Endothelial cell of umbilical vein (primary cell): ENCODE measurements at regions of chr22 and their contacts with region 1.

Region 1: DNA sequence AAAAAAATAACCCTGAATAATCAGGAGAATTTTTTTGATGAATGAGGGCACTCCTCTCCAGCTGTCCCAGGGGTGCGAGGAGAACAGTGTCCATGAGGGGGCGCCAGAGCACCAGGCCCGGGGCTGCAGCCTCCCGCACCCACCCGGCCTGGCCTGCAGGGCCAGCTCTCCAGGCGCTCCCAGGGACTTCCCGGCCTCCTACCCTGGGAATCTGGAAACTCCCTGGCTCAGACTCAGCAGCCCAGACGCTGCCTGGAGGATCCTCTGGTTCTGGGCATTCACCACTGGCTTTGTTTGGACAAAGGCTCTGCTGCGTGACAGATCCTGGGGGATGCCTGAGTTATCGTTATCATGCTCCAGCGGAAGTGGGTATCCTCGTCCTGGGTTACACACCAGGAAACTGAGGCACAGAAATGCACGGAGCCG is 31.0 kb downstream of the MCM5 start:
- DNase-seq: peak; percentile 90
- H3K4me3 ChIP-seq: no peak overlapping the region
- H3K27ac ChIP-seq: peak overlapping the region; percentile 23
- H3K4me1 ChIP-seq: no peaks in the 10 kb centered on the region
- H3K27me3 ChIP-seq: no peaks in the 10 kb centered on the region
- CTCF ChIP-seq: peak; percentile 97 to 98
- POLR2A ChIP-seq: no peak

Region 2: GRCh38 chr22:35350539-35351503 is 80.1 kb before region 1 on chr22:
- CTCF ChIA-PET with region 1: interaction called, 39 read pairs
- POLR2A ChIA-PET with region 1: no interaction called
- dilution Hi-C with region 1: no loop called
- intact Hi-C with region 1: loop called (anchors 1 kb)
- DNase-seq: peak; percentile 89
- H3K4me3 ChIP-seq: peak overlapping the region; percentile 56 to 75 (median 59)
- H3K27ac ChIP-seq: peak overlapping the region; percentile 70
- H3K4me1 ChIP-seq: peaks cover 14% of the 10 kb centered on the region
- H3K27me3 ChIP-seq: no peaks in the 10 kb centered on the region
- CTCF ChIP-seq: peak; percentile 79 to 90
- POLR2A ChIP-seq: peak; percentile 75

Region 3: GRCh38 chr22:35467681-35468434 is 36.9 kb after region 1 on chr22:
- CTCF ChIA-PET with region 1: interaction called, 13 read pairs
- POLR2A ChIA-PET with region 1: no interaction called
- dilution Hi-C with region 1: no loop called
- intact Hi-C with region 1: no loop called
- DNase-seq: peak; percentile 90
- H3K4me3 ChIP-seq: no peak overlapping the region
- H3K27ac ChIP-seq: peak overlapping the region; percentile 60
- H3K4me1 ChIP-seq: peaks cover 27% of the 10 kb centered on the region
- H3K27me3 ChIP-seq: no peaks in the 10 kb centered on the region
- CTCF ChIP-seq: no peak
- POLR2A ChIP-seq: no peak

Region 4: GRCh38 chr22:35552196-35552842 is 121.4 kb after region 1 on chr22:
- CTCF ChIA-PET with region 1: interaction called, 12 read pairs
- POLR2A ChIA-PET with region 1: no interaction called
- dilution Hi-C with region 1: no loop called
- intact Hi-C with region 1: no loop called
- DNase-seq: peak; percentile 15
- H3K4me3 ChIP-seq: no peak overlapping the region
- H3K27ac ChIP-seq: no peak overlapping the region
- H3K4me1 ChIP-seq: no peaks in the 10 kb centered on the region
- H3K27me3 ChIP-seq: peaks cover 2 to 7% of the 10 kb centered on the region in 2 experiments
- CTCF ChIP-seq: no peak
- POLR2A ChIP-seq: no peak

Region 5: GRCh38 chr22:35582861-35583670 is 152.2 kb after region 1 on chr22:
- CTCF ChIA-PET with region 1: interaction called, 196 read pairs
- POLR2A ChIA-PET with region 1: no interaction called
- dilution Hi-C with region 1: no loop called
- intact Hi-C with region 1: loop called (anchors 1 kb)
- DNase-seq: peak; percentile 63
- H3K4me3 ChIP-seq: no peak overlapping the region
- H3K27ac ChIP-seq: no peak overlapping the region
- H3K4me1 ChIP-seq: no peaks in the 10 kb centered on the region
- H3K27me3 ChIP-seq: peaks cover 0 to 2% of the 10 kb centered on the region in 2 experiments
- CTCF ChIP-seq: peak; percentile 89
- POLR2A ChIP-seq: no peak

Region 6: DNA sequence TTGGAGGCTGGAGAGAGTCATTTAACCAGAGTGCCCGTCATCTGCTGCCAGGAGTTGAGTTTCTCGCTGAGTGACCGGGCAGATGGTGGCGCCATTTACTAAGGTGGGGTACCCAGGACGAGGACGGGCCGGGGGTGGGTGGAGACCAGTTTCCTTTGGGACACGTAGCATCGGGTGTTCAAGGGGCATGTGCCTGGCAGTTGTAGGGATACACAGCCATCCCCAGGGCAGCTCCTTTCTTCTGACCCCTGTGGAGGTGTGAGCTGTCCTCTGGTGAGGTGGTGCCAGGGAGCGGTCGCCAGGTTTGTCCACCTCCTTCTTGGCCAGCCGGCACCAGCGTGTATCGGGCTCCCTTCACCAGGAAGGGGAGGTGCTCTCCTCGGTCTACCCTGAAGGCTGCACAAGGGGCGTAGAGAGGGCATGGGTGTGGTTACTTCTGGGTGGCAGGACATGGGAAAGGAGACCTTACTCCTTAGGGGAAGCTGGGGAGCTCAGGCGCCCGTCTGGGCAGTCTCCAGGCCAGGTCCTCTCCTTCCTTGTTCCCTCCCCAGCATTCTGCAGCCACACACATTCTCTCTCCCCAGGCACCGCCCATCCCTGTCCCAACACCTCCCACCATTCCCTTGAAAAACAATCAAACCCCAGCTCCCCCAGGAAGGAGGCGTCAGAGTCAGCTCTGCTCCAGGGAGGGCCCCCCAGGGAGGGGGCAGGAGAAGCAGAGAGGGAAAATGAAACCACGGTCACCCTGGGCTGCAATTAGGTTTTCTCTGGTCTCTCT is 196.5 kb after region 1 on chr22:
- CTCF ChIA-PET with region 1: interaction called, 40 read pairs
- POLR2A ChIA-PET with region 1: no interaction called
- dilution Hi-C with region 1: no loop called
- intact Hi-C with region 1: loop called (anchors 1 kb)
- DNase-seq: peak; percentile 76
- H3K4me3 ChIP-seq: peak overlapping the region; percentile 27 to 58 (median 51)
- H3K27ac ChIP-seq: peak overlapping the region; percentile 30
- H3K4me1 ChIP-seq: peaks cover 8% of the 10 kb centered on the region
- H3K27me3 ChIP-seq: no peaks in the 10 kb centered on the region
- CTCF ChIP-seq: peak; percentile 48 to 54
- POLR2A ChIP-seq: peak; percentile 21